Dorsolateral prefrontal cortex (tissue), 120 donors: ENCODE measurements at regions of chr14 and their contacts with region 1.

Region 1: GRCh38 chr14:77158175-77158891 is 16.7 kb upstream of the ZDHHC22 start:
- DNase-seq: peak; percentile 56 to 94 (median 89)
- H3K4me3 ChIP-seq: peak overlapping the region in 39 of 59 donors; percentile 7 to 54 (median 29)
- H3K27ac ChIP-seq: peak overlapping the region; percentile 35 to 93 (median 84)
- H3K27me3 ChIP-seq: no peaks in the 10 kb centered on the region
- CTCF ChIP-seq: peak in 32 of 56 donors; percentile 2 to 57 (median 30)

Region 2: DNA sequence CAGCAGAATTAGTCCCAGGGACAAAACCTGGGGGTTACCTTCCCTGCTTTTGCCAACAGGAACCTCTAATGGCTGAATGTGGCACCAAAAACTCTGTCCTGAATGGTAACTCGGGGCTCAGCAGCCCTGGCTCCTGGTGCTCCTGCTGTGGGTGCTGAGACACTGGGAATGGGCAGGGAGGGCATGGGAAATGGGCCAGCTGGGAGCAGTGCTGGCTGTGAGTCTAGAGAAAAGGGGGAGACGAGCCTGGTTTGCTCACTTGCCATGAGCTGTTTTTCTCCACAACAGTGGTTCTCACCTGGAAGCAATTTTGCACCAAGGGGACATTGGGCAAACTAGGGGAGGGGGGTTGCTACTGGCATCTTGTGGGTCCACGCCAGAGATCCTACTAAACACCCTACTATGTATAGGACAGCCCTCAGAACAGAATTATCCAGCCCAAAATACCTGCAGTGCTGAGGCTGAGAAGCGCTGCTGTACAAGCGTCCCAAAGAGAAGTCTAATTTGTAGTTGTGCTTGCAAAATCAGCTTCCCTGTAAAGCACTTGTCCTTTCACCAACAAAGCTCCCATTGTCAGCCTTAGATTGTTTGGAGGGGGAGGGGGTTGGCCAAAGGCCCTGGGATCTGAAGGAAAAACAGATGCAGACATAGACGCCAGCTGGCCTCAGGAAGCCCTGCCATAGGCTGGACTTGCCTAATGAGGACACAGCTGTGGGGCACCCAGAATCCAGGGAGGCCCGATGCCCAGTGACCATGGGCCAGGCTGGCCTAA is 328.5 kb before region 1 on chr14:
- intact Hi-C with region 1: no loop called
- DNase-seq: peak; percentile 24 to 98 (median 91)
- H3K4me3 ChIP-seq: peak overlapping the region in 41 of 59 donors; percentile 1 to 59 (median 26)
- H3K27ac ChIP-seq: peak overlapping the region; percentile 23 to 98 (median 91)
- H3K27me3 ChIP-seq: no peaks in the 10 kb centered on the region
- CTCF ChIP-seq: peak in 13 of 56 donors; percentile 3 to 39 (median 17)

Region 3: GRCh38 chr14:77181603-77182437 is 23.5 kb after region 1 on chr14 and contains the start of gene TMEM63C:
- intact Hi-C with region 1: loop called in 1 of 2 experiments (anchors 2 kb)
- DNase-seq: peak in 8 of 10 donors; percentile 73 to 87 (median 80)
- H3K4me3 ChIP-seq: peak within 1 kb of the TSS; percentile 31 to 75 (median 63)
- H3K27ac ChIP-seq: peak within 1 kb of the TSS in 40 of 59 donors; percentile 1 to 81 (median 49)
- H3K27me3 ChIP-seq: peaks cover 0 to 15% (median 0%) of the 10 kb centered on the region in 45 donors
- CTCF ChIP-seq: no peak
- total RNA-seq, gene TMEM63C: 19.9 to 103 (median 62.0) TPM

Region 4: DNA sequence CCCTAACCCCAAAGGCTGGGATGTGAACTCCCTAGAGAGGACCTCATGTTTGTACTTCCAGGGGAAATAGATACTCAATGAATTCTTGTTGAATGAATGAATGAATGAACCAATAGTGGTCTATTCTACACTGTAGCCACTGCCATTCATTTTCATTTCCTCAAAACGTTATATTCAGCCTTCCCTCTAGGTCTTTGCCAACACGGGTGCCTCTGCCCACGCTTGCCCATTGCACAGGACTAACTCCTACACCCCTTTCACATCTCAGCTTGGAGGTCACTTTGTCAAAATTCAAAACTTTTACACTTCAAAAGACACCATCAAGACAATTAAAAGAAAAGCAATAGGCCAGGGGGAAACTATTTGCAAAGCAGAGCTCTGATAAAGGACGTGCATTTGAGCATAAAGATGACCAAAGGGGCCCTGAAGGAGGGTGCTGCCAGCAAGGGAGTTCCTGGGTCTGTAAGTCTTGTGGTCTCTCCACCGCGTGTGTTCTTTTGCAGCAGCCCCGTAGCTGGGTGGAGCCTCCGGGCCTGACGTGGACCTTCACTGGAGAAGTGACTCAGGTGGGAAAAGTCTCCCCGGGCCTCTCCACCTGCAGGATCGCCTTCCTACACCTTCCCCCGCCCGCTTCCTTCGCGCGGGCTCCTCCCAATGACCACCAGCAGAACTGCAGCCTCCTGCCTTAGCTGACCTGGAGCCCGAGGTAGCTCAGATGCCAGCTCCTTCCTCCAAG is 54.8 kb after region 1 on chr14:
- intact Hi-C with region 1: loop called (anchors 5 kb)
- DNase-seq: peak in 7 of 10 donors; percentile 39 to 82 (median 61)
- H3K4me3 ChIP-seq: no peak overlapping the region
- H3K27ac ChIP-seq: peak overlapping the region in 6 of 59 donors; percentile 18 to 66 (median 32)
- H3K27me3 ChIP-seq: no peaks in the 10 kb centered on the region
- CTCF ChIP-seq: peak in 54 of 56 donors; percentile 34 to 71 (median 54)